ENCODE measurements at regions of chr7 and their contacts with region 1.

Region 1: GRCh38 chr7:149811221-149811620 is 27.0 kb upstream of the ZNF862 start:
- DNase-seq: no peak
- H3K4me3 ChIP-seq: no peak overlapping the region
- H3K27ac ChIP-seq: no peak overlapping the region
- H3K4me1 ChIP-seq: peaks cover 0 to 17% (median 5%) of the 10 kb centered on the region in 4 experiments; a peak in 6 of 7 replicates
- H3K27me3 ChIP-seq: no peaks in the 10 kb centered on the region
- CTCF ChIP-seq: peak in 2 of 3 experiments; percentile 25 to 51; a peak in 2 of 4 replicates
- EP300 ChIP-seq: no peak
- POLR2A ChIP-seq: no peak
- RAD21 ChIP-seq: no peak; a peak in 2 of 4 replicates

Region 2: GRCh38 chr7:149220539-149220938 is 590.7 kb before region 1 on chr7:
- CTCF ChIA-PET with region 1: no interaction called
- POLR2A ChIA-PET with region 1: no interaction called
- DNase-seq: no peak
- H3K4me3 ChIP-seq: no peak overlapping the region
- H3K27ac ChIP-seq: no peak overlapping the region
- H3K4me1 ChIP-seq: no peaks in the 10 kb centered on the region; a peak in 1 of 7 replicates
- H3K27me3 ChIP-seq: no peaks in the 10 kb centered on the region
- CTCF ChIP-seq: no peak
- EP300 ChIP-seq: no peak
- POLR2A ChIP-seq: no peak
- RAD21 ChIP-seq: no peak

Region 3: DNA sequence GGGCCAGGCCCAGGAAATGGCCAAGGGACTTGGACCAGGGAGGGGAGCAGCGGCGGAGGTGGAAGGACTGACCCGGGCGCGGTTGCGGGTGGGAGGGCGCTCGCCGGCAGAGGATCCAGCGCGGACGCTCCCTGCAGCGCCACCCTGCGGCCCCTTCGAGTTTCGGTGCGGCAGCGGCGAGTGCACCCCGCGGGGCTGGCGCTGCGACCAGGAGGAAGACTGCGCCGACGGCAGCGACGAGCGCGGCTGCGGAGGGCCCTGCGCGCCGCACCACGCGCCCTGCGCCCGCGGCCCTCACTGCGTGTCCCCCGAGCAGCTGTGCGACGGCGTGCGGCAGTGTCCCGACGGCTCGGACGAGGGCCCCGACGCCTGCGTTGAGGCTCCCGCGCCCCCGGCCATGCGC is 21.1 kb before region 1 on chr7:
- CTCF ChIA-PET with region 1: interaction called, 120 read pairs
- POLR2A ChIA-PET with region 1: interaction called, 3 read pairs
- DNase-seq: peak in 1 of 2 experiments; percentile 90
- H3K4me3 ChIP-seq: peak overlapping the region; percentile 14 to 55 (median 23)
- H3K27ac ChIP-seq: no peak overlapping the region
- H3K4me1 ChIP-seq: peaks cover 0 to 4% (median 2%) of the 10 kb centered on the region in 4 experiments; a peak in 5 of 7 replicates
- H3K27me3 ChIP-seq: peaks cover 8 to 44% (median 35%) of the 10 kb centered on the region in 4 experiments
- CTCF ChIP-seq: peak in 2 of 3 experiments; percentile 82 to 86; a peak in 3 of 4 replicates
- EP300 ChIP-seq: no peak
- POLR2A ChIP-seq: no peak
- RAD21 ChIP-seq: peak; percentile 34 to 52; a peak in 3 of 4 replicates

Region 4: DNA sequence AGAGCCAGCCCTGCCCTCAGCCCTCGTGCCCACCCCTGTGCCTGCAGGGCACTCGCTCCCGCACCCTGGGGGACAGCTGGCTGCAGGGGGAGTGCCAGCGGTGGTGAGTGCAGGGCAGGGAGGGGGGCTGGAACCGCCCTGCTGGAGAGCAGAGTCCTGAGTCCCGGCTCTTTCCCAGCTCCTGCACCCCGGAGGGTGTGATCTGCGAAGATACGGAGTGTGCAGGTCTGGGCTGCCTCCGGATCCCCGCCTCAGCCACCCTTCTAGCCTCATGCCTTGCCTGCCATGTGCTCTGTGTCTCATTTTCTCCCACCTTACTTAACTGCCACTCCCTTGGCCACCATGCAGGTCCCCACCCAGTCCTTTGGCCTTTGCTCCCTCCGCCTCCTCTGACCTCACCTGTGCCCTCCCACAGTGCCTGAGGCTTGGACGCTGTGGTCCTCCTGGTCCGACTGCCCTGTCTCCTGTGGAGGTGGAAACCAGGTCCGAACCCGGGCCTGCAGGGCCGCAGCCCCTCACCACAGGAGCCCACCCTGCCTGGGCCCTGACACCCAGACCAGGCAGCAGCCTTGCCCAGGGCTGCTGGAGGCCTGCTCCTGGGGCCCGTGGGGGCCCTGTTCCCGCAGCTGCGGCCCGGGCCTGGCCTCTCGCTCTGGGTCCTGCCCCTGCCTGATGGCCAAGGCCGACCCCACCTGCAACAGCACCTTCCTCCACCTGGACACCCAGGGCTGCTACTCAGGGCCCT is 10.4 kb after region 1 on chr7:
- CTCF ChIA-PET with region 1: interaction called, 67 read pairs
- POLR2A ChIA-PET with region 1: interaction called, 4 read pairs
- DNase-seq: no peak
- H3K4me3 ChIP-seq: no peak overlapping the region
- H3K27ac ChIP-seq: no peak overlapping the region
- H3K4me1 ChIP-seq: peaks cover 0 to 1% (median 0%) of the 10 kb centered on the region in 4 experiments; a peak in 2 of 7 replicates
- H3K27me3 ChIP-seq: no peaks in the 10 kb centered on the region
- CTCF ChIP-seq: no peak
- EP300 ChIP-seq: no peak
- POLR2A ChIP-seq: no peak
- RAD21 ChIP-seq: no peak

Region 5: DNA sequence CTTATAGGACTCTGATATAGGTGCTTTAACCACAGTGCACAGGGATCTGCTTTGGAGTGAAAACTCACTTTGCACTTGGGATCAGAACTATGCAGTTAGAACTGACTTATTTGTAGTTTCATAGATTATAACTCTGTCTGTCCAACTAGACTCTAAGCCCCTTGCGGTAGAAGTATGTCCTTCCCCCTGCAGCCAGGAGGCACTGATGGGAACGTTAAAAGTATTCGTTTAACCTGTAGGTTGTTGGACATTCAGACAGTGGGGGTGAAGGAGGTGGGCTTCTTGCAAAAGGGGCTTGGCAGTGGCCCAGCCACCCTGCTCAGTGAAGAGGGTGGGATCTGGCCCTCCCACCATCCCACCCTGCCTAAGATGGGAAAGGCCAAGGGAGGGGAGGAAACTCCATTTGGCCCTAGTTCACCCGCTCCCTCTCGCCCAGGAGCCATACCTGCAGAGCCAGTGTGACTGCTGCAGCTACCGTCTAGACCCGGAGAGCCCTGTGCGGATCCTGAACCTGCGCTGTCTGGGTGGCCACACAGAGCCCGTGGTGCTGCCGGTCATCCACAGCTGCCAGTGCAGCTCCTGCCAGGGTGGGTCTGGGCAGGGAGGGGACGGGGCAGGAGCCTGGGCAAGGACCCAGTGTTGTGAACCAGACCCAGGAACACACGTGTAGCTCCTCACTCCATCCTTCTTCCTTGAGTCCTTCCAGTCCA is 21.3 kb after region 1 on chr7:
- CTCF ChIA-PET with region 1: interaction called, 25 read pairs
- POLR2A ChIA-PET with region 1: no interaction called
- DNase-seq: no peak
- H3K4me3 ChIP-seq: no peak overlapping the region
- H3K27ac ChIP-seq: no peak overlapping the region
- H3K4me1 ChIP-seq: peaks cover 0 to 10% (median 6%) of the 10 kb centered on the region in 4 experiments; a peak in 6 of 7 replicates
- H3K27me3 ChIP-seq: no peaks in the 10 kb centered on the region
- CTCF ChIP-seq: peak in 1 of 3 experiments; percentile 32; a peak in 1 of 4 replicates
- EP300 ChIP-seq: no peak
- POLR2A ChIP-seq: no peak
- RAD21 ChIP-seq: no peak

Region 6: DNA sequence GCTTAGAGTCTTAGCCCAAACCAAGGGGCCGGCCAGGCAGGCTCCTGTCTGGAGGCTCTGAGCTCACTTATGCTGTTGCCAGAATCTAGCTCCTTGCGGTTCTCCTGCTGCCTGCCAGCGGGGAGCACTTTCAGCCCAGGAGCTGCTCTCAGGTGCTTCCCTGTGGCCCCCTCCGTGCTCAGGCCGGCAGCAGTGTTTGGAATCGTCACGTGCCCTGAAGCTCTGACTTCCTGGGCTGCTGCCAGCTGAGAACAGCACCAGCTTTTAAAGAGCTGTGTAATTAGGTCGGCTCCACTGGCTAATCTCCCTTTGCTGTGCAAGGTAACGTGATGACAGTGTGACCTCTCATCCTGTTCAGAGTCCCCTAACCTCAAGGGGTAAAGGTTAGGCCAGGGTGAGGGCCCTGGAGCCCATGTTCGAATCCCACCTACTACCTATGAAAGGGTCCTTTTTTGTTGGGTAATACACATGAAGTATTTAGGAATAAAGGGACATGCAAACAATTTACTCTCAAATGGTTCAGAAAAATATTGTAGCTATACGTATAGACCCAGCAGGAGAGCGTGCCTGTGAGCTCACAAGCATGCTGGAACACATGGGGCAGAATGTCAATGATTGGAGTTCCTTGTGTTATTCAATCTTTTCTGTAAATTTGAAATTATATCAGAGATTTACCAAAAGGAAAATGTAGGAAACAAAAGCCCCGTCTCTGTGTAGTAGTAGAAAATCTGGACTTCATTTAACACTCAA is 43.6 kb after region 1 on chr7:
- CTCF ChIA-PET with region 1: interaction called, 209 read pairs
- POLR2A ChIA-PET with region 1: no interaction called
- DNase-seq: peak in 1 of 2 experiments; percentile 62
- H3K4me3 ChIP-seq: peak overlapping the region in 2 of 4 experiments; percentile 1 to 27; a peak in 1 of 8 replicates
- H3K27ac ChIP-seq: no peak overlapping the region
- H3K4me1 ChIP-seq: peaks cover 6 to 17% (median 11%) of the 10 kb centered on the region in 4 experiments
- H3K27me3 ChIP-seq: no peaks in the 10 kb centered on the region
- CTCF ChIP-seq: no peak
- EP300 ChIP-seq: no peak
- POLR2A ChIP-seq: no peak
- RAD21 ChIP-seq: no peak